Thyroid gland (tissue), 4 donors: ENCODE measurements at regions of chr13 and their contacts with region 1.

Region 1: GRCh38 chr13:112711528-112712265 is 21.9 kb downstream of the ATP11A start:
- DNase-seq: peak; percentile 82 to 88
- H3K4me3 ChIP-seq: no peak overlapping the region
- H3K27ac ChIP-seq: peak overlapping the region; percentile 45 to 87 (median 83)
- H3K4me1 ChIP-seq: peaks cover 19 to 44% of the 10 kb centered on the region in 2 donors
- H3K27me3 ChIP-seq: no peaks in the 10 kb centered on the region
- CTCF ChIP-seq: no peak
- POLR2A ChIP-seq: no peak

Region 2: DNA sequence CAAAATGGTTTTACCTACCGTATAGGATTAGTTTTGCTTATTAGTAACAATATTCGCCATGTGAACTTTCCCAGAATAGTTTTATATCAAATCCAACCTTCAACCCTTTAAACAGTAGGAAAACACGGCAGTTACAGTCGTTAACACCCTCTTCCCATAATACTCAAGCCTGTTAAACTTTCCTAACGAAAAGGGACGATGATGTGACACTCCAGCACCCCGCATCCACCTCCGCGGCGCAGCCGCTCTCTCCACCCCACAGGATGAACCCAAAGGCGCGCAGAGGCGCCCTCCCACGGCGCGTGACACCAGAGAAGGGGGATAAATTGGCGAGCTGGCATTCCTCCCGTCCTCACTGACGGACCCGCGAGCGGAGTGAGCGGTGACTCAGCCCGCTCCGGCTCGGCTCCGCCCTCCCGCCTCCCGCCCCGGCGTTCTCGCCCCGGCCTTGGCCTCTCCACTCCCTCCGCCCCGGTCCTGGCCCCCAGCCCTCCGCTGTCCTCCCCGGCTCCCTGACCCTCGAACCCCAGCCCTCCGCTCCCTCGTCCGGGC is 124.4 kb before region 1 on chr13:
- intact Hi-C with region 1: no loop called
- DNase-seq: peak; percentile 78 to 82
- H3K4me3 ChIP-seq: peak overlapping the region; percentile 81 to 90 (median 85)
- H3K27ac ChIP-seq: peak overlapping the region; percentile 90 to 93 (median 92)
- H3K4me1 ChIP-seq: peaks cover 0 to 9% of the 10 kb centered on the region in 2 donors
- H3K27me3 ChIP-seq: no peaks in the 10 kb centered on the region
- CTCF ChIP-seq: no peak
- POLR2A ChIP-seq: peak in 1 of 2 donors; percentile 48

Region 3: DNA sequence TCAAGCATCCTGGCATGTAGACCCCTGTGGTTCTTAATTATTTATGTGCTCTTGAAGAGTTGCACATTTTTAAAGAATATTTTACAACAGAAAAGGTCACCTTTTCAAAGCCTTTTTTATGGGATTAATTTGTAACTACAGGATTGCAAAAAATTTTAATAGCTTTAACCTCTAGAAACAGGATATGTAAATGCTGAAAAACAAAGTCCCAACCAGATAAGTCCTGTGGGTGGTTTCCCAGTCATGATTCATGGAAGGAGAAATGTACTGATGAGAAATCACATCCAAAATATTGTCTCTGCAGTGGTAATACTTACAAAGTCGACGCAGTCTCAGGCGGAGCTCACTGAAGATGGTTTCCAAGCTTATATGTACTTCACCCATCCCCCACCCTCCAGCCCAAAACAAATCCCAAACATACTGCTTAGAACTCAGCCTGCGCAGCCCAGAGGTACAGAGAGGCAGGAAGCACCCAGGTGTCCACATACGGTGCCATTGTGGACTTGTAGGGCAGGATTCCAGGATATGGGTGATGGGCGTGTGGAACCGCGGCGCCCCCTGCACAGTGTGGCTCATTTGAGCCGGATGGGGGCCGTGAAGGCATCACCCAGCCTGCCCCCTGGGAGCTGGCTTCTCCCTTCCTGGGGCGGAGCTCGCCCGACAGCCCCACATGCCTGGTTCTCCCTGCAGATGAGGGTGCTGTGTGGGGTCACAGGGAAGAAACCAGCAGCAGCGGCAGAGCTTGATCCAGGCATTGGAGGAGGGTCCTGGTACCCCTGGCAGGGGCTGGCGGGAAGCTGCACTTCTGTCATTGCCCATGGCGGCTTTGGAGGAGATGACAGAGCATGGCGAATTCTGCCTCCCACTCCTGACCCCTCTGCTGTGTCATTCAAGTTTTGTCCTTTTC is 79.3 kb after region 1 on chr13:
- intact Hi-C with region 1: loop called (anchors 5 kb)
- DNase-seq: peak; percentile 18 to 33
- H3K4me3 ChIP-seq: peak overlapping the region in 1 of 3 donors; percentile 18
- H3K27ac ChIP-seq: peak overlapping the region; percentile 50 to 86 (median 71)
- H3K4me1 ChIP-seq: peaks cover 44 to 53% of the 10 kb centered on the region in 2 donors
- H3K27me3 ChIP-seq: no peaks in the 10 kb centered on the region
- CTCF ChIP-seq: no peak
- POLR2A ChIP-seq: no peak